ENCODE measurements at regions of chr14 and their contacts with region 1.

Region 1: DNA sequence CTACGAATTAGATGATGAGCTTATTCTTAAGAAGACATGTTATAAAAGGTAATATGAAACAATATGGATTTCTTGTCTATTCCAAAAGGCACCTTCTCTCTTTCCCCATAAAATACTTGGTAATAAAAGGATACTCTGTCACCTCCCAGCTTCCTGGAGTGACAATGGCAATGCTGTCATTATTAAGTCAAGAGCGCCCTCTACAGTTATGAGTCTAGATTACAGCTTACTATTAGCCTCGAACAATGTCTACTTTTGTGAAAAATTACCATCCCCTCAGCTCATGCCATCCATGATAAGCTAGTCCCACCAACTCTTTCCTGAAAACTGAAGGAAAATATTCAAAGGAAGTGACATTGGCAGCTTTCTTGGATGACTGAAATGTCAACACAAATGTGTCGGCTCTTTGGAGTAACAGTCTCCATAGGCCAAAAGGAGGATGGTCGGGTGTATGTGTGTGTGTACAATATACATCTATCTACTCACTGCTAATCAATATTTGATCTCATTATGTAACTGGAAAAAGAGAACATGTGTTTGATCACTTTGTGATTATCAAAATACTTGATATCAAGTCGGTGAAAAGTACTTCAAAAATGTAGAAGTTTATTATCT is 48.7 kb upstream of the CDKN3 start:
- DNase-seq: no peak
- ATAC-seq: peak; percentile 78
- H3K4me3 ChIP-seq: no peak overlapping the region
- H3K27ac ChIP-seq: no peak overlapping the region
- H3K4me1 ChIP-seq: no peaks in the 10 kb centered on the region
- H3K27me3 ChIP-seq: no peaks in the 10 kb centered on the region
- CTCF ChIP-seq: peak; percentile 60 to 79 (median 70)
- EP300 ChIP-seq: no peak
- POLR2A ChIP-seq: no peak
- RAD21 ChIP-seq: peak; percentile 87

Region 2: DNA sequence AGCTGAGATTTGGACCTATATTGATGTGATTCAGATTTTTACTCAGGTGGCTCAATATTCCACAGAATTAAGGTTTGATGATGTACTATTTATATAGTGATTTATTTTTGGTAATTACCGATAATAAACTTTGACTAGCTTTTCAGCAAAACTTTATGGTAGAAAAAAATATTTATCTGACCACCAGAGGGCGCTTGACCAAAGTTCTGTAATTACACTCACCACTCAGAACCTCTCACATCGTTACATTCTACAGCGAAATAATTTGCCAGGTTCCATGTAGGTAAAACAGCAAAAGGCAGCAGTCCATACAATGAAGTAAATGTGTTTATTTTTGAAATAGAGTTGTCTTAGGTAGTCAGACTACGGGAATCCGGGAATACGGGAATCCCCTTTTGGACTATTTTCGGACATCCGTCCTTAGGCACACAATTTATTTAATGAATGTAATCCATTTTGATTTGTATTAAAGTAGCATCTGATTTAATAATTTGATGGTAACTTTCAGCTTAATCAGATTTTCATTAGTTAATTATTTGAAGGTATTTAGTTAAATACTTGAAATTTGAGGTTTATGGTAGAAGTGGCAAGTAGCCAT is 1052.0 kb before region 1 on chr14:
- CTCF ChIA-PET with region 1: interaction called, 18 read pairs
- POLR2A ChIA-PET with region 1: no interaction called
- RAD21 ChIA-PET with region 1: interaction called, 16 read pairs
- SMC1A ChIA-PET with region 1: interaction called, 8 read pairs
- in situ Hi-C with region 1: no loop called
- intact Hi-C with region 1: loop called (anchors 2 kb)
- DNase-seq: no peak
- ATAC-seq: peak; percentile 63
- H3K4me3 ChIP-seq: no peak overlapping the region
- H3K27ac ChIP-seq: no peak overlapping the region
- H3K4me1 ChIP-seq: no peaks in the 10 kb centered on the region
- H3K27me3 ChIP-seq: no peaks in the 10 kb centered on the region
- CTCF ChIP-seq: peak; percentile 49 to 55 (median 52); a peak in 5 of 6 replicates
- EP300 ChIP-seq: no peak
- POLR2A ChIP-seq: no peak
- RAD21 ChIP-seq: peak; percentile 32; the same call in 1 of the 2 replicates

Region 3: GRCh38 chr14:53432378-53432802 is 915.7 kb before region 1 on chr14:
- CTCF ChIA-PET with region 1: interaction called, 51 read pairs
- POLR2A ChIA-PET with region 1: no interaction called
- RAD21 ChIA-PET with region 1: interaction called, 8 read pairs
- SMC1A ChIA-PET with region 1: interaction called, 3 read pairs
- in situ Hi-C with region 1: no loop called
- intact Hi-C with region 1: loop called (anchors 1 kb)
- DNase-seq: no peak
- ATAC-seq: peak; percentile 87
- H3K4me3 ChIP-seq: no peak overlapping the region
- H3K27ac ChIP-seq: no peak overlapping the region
- H3K4me1 ChIP-seq: no peaks in the 10 kb centered on the region
- H3K27me3 ChIP-seq: no peaks in the 10 kb centered on the region
- CTCF ChIP-seq: peak; percentile 63 to 70 (median 70)
- EP300 ChIP-seq: no peak
- POLR2A ChIP-seq: no peak
- RAD21 ChIP-seq: peak; percentile 87

Region 4: DNA sequence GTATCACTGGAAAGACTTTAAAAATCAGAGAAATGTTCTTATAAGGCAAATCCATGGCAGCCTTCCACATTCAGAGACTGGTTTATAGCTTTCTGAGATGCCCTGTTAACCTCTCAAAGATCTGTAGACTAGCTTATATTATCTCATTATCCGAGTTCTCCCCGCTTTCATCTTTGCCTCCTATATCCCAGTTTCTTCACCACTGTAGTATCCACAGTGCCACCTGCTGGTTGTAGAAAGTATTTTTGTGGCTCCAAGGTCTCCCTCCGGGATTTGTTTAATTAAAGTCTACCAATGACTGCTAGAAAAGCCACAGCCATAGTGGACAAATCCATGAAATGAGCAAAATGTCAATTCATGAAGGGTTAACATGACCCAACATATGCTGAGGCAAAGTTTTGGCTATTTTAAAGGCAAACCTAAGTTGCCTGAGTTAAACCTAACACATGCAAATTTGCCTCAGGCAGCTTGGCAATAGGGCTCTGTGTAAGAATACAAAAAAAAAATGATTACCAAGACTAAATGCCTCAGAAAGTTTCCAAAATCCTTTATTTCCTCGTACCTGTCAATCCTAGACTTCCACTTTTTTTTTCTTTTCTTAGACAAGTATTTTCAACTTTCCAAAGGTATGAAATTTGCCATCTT is 172.7 kb before region 1 on chr14:
- CTCF ChIA-PET with region 1: interaction called, 30 read pairs
- POLR2A ChIA-PET with region 1: no interaction called
- RAD21 ChIA-PET with region 1: interaction called, 7 read pairs
- SMC1A ChIA-PET with region 1: interaction called, 5 read pairs
- in situ Hi-C with region 1: no loop called
- intact Hi-C with region 1: no loop called
- DNase-seq: peak; percentile 16
- ATAC-seq: peak; percentile 62; the same call in 2 of the 3 replicates
- H3K4me3 ChIP-seq: no peak overlapping the region
- H3K27ac ChIP-seq: no peak overlapping the region
- H3K4me1 ChIP-seq: no peaks in the 10 kb centered on the region
- H3K27me3 ChIP-seq: peaks cover 0 to 4% of the 10 kb centered on the region in 2 experiments; a peak in 1 of 4 replicates
- CTCF ChIP-seq: peak; percentile 60 to 76 (median 69)
- EP300 ChIP-seq: no peak
- POLR2A ChIP-seq: no peak
- RAD21 ChIP-seq: peak; percentile 87

Region 5: DNA sequence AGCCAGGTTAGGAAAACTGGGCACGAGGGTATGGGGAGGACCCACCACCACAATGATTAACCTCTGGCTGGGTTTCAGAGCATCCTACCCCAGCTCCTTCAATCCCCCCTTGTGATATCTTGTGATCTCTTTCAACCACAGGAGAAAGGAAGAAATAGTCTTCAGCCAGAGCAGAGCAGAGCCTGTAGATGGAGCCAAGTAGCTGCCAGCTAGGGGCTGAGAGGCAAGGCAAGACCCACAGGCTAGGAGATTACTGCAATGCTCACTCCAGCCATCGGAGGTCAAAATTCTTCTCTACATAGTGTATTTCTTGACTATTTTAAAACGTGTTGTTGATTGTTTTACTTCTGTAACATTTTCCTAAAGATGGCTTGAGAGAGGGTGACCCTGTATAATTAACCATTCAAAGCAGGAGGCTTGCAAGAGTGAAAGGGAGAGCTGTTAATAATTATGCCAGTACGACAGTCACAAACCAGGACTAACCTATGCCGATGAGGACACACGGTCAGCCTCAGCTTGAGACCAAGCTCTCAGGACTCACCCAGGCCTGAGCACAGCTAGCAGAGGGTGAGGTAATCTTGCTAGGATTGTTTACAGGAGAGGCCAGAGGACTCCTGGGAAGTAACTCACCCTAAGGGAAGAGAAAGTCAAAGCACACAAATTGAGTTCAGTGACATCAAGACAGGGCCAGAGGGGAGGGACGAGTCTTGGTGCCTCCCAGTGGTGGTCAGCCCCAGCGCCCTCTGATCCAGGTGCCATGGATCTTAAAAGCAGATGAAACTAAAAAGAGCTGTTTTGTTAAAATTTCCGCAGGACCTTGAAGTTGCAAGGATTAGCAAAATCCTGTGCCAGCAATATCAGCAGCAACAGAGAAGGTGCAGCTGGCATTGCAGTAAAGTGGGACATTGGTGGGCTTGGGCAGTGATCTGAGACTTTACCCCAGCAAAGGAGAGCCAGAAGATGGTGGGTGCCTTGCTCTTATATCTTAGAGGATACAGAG is 18.9 kb after region 1 on chr14:
- CTCF ChIA-PET with region 1: interaction called, 13 read pairs
- POLR2A ChIA-PET with region 1: no interaction called
- RAD21 ChIA-PET with region 1: interaction called, 5 read pairs
- SMC1A ChIA-PET with region 1: no interaction called
- in situ Hi-C with region 1: no loop called
- intact Hi-C with region 1: no loop called
- DNase-seq: no peak
- ATAC-seq: peak; percentile 95
- H3K4me3 ChIP-seq: no peak overlapping the region
- H3K27ac ChIP-seq: no peak overlapping the region
- H3K4me1 ChIP-seq: no peaks in the 10 kb centered on the region
- H3K27me3 ChIP-seq: 0 out of 4 replicates have a peak, but pooled peaks cover 0 to 3% of the 10 kb centered on the region in 2 experiments
- CTCF ChIP-seq: peak; percentile 54 to 74 (median 58); a peak in 5 of 6 replicates
- EP300 ChIP-seq: no peak
- POLR2A ChIP-seq: no peak
- RAD21 ChIP-seq: peak; percentile 75

Region 6: GRCh38 chr14:55019968-55020554 is 672.0 kb after region 1 on chr14:
- CTCF ChIA-PET with region 1: no interaction called
- POLR2A ChIA-PET with region 1: no interaction called
- RAD21 ChIA-PET with region 1: no interaction called
- SMC1A ChIA-PET with region 1: no interaction called
- in situ Hi-C with region 1: no loop called
- intact Hi-C with region 1: no loop called
- DNase-seq: no peak
- ATAC-seq: peak; percentile 63
- H3K4me3 ChIP-seq: no peak overlapping the region
- H3K27ac ChIP-seq: 0 out of 2 replicates have a peak overlapping the region, but pooled peaks have one; percentile 18
- H3K4me1 ChIP-seq: no peaks in the 10 kb centered on the region
- H3K27me3 ChIP-seq: no peaks in the 10 kb centered on the region
- CTCF ChIP-seq: no peak
- EP300 ChIP-seq: no peak
- POLR2A ChIP-seq: no peak
- RAD21 ChIP-seq: no peak